K562 (cell line): ENCODE measurements at regions of chr11 and their contacts with region 1.

Region 1: DNA sequence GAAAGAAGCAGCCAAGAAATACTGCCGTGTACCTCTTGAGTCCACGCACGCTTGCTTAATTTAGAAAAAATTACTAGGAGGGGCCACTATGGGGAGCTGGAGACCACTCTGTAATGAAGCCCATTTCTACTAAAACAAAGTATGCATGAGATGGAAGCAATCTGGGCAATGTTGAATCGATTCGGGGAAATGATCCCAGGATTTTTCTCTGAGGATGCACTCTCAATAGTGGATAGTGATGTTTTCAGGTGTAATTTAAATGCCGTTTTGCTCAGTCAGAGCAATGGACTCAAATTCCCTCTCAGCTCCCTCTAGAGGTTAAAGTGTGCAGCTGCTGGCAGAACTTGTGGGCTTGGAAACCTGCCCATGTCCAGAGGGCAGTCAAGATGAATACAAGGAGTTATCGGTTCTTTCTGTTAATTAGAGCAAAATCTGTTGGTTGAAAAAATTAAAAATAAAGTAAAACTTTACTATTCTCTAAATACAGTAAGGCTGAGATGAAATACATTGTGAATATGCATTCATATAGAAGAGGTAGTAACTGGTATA is 64.1 kb downstream of the ME3 start:
- DNase-seq: peak; percentile 62 to 76 (median 68)
- ATAC-seq: peak; percentile 98
- H3K4me3 ChIP-seq: no peak overlapping the region
- H3K27ac ChIP-seq: no peak overlapping the region
- H3K4me1 ChIP-seq: no peaks in the 10 kb centered on the region
- H3K27me3 ChIP-seq: no peaks in the 10 kb centered on the region
- CTCF ChIP-seq: peak; percentile 90 to 96 (median 95)
- EP300 ChIP-seq: no peak
- POLR2A ChIP-seq: no peak
- RAD21 ChIP-seq: peak; percentile 85 to 91

Region 2: GRCh38 chr11:86749376-86749775 is 141.1 kb after region 1 on chr11:
- CTCF ChIA-PET with region 1: interaction called, 10 read pairs
- POLR2A ChIA-PET with region 1: no interaction called
- in situ Hi-C with region 1: no loop called
- intact Hi-C with region 1: loop called (anchors 1 kb)
- DNase-seq: peak in 2 of 4 experiments; percentile 26 to 36
- ATAC-seq: peak; percentile 78
- H3K4me3 ChIP-seq: no peak overlapping the region
- H3K27ac ChIP-seq: no peak overlapping the region
- H3K4me1 ChIP-seq: no peaks in the 10 kb centered on the region
- H3K27me3 ChIP-seq: peaks cover 0 to 9% of the 10 kb centered on the region in 2 experiments; a peak in 2 of 5 replicates
- CTCF ChIP-seq: peak; percentile 66 to 98 (median 97)
- EP300 ChIP-seq: no peak
- POLR2A ChIP-seq: no peak
- RAD21 ChIP-seq: peak; percentile 79 to 88

Region 3: DNA sequence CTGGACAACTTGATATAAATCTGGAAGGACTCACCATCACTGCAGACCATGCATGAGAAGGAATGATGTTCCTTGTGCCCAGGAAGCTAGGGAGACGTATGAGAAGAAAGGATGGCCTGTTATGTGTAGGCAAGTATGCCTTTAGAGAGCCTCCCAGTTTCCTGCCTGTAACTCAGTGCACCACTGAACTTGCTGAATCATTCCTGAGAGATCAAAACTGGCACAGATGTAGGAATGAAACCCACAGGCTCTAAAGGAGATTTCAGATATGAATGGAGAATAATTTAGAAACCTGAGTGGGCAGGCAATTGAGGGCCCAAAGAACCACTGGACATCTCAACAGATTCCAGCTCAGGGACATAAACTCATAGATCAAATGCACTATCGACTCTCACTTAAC is 153.7 kb after region 1 on chr11:
- CTCF ChIA-PET with region 1: no interaction called
- POLR2A ChIA-PET with region 1: no interaction called
- in situ Hi-C with region 1: no loop called
- intact Hi-C with region 1: no loop called
- DNase-seq: no peak
- ATAC-seq: no peak
- H3K4me3 ChIP-seq: no peak overlapping the region
- H3K27ac ChIP-seq: no peak overlapping the region
- H3K4me1 ChIP-seq: no peaks in the 10 kb centered on the region
- H3K27me3 ChIP-seq: peaks cover 0 to 4% of the 10 kb centered on the region in 2 experiments; a peak in 1 of 5 replicates
- CTCF ChIP-seq: no peak
- EP300 ChIP-seq: no peak
- POLR2A ChIP-seq: no peak
- RAD21 ChIP-seq: no peak

Region 4: DNA sequence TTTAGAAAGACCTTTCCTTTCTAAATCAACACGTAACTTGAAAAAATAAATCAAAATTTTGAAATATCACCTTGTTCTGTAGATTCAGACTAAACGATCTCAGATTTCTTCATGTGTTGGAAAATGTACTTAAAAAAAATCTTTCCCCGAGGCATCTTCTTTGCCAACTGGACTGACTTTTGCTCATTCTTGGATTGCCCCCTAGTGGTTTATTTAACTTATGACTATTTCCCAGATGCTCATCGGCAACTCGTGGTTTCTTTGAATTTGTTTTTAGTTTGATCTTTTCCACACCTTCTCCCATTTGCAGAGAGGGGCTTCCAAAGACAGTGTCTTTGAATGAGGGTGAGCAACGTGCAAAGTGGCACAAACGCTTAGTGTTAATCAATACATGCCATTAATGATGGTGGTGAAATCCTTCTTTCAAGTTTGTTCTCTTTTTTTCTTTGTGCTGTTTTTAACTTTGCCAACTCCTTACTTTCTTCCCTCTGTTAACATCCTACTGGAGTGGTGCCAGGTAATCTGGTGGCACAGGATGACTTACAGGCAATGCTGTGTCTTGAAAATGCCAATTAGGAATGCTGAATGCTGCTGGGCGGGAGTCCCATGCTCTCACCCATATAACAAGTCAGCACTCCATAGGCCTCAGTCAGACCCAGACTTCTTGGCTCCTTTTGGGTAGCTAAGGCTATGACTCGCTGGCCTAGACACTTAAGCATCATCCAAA is 210.3 kb after region 1 on chr11:
- CTCF ChIA-PET with region 1: interaction called, 10 read pairs
- POLR2A ChIA-PET with region 1: no interaction called
- in situ Hi-C with region 1: no loop called
- intact Hi-C with region 1: loop called (anchors 1 kb)
- DNase-seq: peak; percentile 49 to 64 (median 55)
- ATAC-seq: peak; percentile 77
- H3K4me3 ChIP-seq: no peak overlapping the region
- H3K27ac ChIP-seq: no peak overlapping the region
- H3K4me1 ChIP-seq: no peaks in the 10 kb centered on the region
- H3K27me3 ChIP-seq: peaks cover 0 to 14% of the 10 kb centered on the region in 2 experiments; a peak in 2 of 5 replicates
- CTCF ChIP-seq: peak; percentile 61 to 88 (median 67)
- EP300 ChIP-seq: no peak
- POLR2A ChIP-seq: no peak
- RAD21 ChIP-seq: peak; percentile 93 to 95

Region 5: DNA sequence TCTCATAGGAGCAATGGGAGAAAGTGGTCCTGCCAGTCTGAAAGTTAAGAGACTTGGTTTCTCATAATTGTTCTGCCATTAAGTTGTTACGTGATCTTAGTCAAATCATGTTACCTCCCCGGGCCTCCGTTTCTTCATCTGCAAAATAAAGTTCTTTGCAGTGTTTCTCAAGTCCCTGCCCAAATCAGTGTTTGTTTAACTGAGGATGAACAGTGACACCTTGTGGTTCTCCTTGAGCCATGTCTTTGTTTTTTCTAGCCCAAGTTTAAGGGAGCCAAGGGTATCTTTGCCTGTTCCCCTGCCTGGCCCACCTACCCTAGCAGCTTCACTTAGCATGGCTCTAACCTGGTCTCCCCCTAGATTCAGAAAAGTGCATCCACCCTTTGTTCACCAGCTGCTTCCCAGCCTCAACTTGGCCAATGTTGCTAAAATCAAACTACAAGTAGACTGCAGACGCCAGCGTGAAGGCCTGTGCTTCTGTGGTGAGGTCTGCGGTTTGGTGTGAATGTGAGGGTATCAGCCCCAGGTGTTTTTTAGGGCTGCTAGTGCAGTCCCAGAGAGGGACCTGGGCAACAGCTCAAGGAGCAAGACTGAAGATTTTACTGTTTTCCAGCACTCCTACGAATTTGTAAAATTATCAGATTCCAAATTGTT is 311.4 kb after region 1 on chr11:
- CTCF ChIA-PET with region 1: no interaction called
- POLR2A ChIA-PET with region 1: no interaction called
- in situ Hi-C with region 1: no loop called
- intact Hi-C with region 1: loop called (anchors 10 kb)
- DNase-seq: peak; percentile 35 to 69 (median 47)
- ATAC-seq: peak; percentile 88
- H3K4me3 ChIP-seq: no peak overlapping the region
- H3K27ac ChIP-seq: no peak overlapping the region
- H3K4me1 ChIP-seq: peaks cover 0 to 11% of the 10 kb centered on the region in 2 experiments; a peak in 3 of 5 replicates
- H3K27me3 ChIP-seq: no peaks in the 10 kb centered on the region
- CTCF ChIP-seq: peak; percentile 70 to 79 (median 71)
- EP300 ChIP-seq: no peak
- POLR2A ChIP-seq: no peak
- RAD21 ChIP-seq: peak; percentile 77 to 84

Region 6: GRCh38 chr11:86978756-86979608 is 370.7 kb after region 1 on chr11:
- CTCF ChIA-PET with region 1: no interaction called
- POLR2A ChIA-PET with region 1: no interaction called
- in situ Hi-C with region 1: no loop called
- intact Hi-C with region 1: no loop called
- DNase-seq: peak; percentile 22 to 66 (median 36)
- ATAC-seq: peak; percentile 96
- H3K4me3 ChIP-seq: no peak overlapping the region
- H3K27ac ChIP-seq: no peak overlapping the region
- H3K4me1 ChIP-seq: no peaks in the 10 kb centered on the region; a peak in 1 of 5 replicates
- H3K27me3 ChIP-seq: no peaks in the 10 kb centered on the region
- CTCF ChIP-seq: peak; percentile 46 to 78 (median 48); a peak in 5 of 6 replicates
- EP300 ChIP-seq: no peak
- POLR2A ChIP-seq: no peak
- RAD21 ChIP-seq: peak; percentile 53 to 78